ENCODE measurements at regions of chr4 and their contacts with region 1.

Region 1: GRCh38 chr4:26217961-26218676 is 102.7 kb upstream of the RBPJ start:
- DNase-seq: peak; percentile 93 to 95 (median 95)
- H3K4me3 ChIP-seq: peak overlapping the region in 1 of 3 experiments; percentile 48
- H3K4me3 Mint-ChIP-seq: peak overlapping the region; percentile 70 to 82
- H3K27ac ChIP-seq: peak overlapping the region; percentile 96 to 99
- H3K27ac Mint-ChIP-seq: peak overlapping the region; percentile 99 to 100 (median 99)
- H3K4me1 ChIP-seq: peaks cover 28 to 31% of the 10 kb centered on the region in 2 donors
- H3K4me1 Mint-ChIP-seq: peaks cover 47% of the 10 kb centered on the region
- H3K27me3 ChIP-seq: no peaks in the 10 kb centered on the region
- H3K27me3 Mint-ChIP-seq: peaks cover 3 to 13% (median 12%) of the 10 kb centered on the region in 3 donors
- CTCF ChIP-seq: no peak

Region 2: DNA sequence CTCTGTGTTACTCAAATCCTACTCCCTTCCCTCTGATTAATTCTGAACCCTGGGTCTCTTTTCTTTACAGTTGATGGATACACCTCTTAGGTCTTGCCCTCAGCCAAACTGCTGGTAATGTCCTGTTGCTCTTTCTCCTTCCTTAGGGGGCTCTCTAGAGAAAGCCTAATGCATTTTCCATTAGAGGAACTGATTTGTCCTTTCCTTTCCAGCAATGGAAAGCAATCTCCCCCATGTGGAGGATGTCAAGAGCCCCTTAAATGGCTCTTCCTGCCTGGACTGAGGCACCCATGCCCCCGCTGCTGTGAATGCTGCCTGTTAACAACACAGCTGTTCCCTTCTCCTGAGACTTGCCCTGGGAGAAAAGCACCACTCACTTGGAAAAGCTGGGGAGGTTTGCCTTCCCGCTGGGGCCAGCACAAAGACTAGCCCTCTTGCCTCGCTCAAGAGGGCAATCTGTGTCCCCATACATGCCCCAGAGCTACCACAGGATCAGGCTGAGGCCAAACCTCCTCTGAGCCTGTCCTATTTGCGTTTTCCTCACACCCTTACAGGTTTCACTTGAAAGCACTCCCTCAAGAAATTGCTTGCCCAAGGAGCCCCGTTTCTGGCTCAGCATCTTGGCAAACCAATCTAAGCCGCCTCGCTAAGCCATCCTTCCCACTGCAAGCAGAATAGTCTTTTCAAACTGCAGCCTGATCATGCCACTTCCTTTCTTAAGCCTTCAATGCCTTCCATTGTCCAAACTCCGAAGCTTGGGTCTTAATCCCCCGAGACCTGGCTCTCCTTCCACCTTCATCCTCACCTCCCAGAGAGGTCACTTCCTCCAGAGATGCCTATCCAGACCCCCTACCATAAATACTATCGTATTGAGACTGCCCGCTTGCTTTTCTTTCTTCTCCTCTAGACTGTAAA is 327.3 kb before region 1 on chr4:
- intact Hi-C with region 1: no loop called
- DNase-seq: no peak
- H3K4me3 ChIP-seq: no peak overlapping the region
- H3K4me3 Mint-ChIP-seq: no peak overlapping the region
- H3K27ac ChIP-seq: no peak overlapping the region
- H3K27ac Mint-ChIP-seq: peak overlapping the region in 1 of 7 donors; percentile 49
- H3K4me1 ChIP-seq: no peaks in the 10 kb centered on the region
- H3K4me1 Mint-ChIP-seq: peaks cover 7% of the 10 kb centered on the region
- H3K27me3 ChIP-seq: no peaks in the 10 kb centered on the region
- H3K27me3 Mint-ChIP-seq: peaks cover 0 to 9% (median 4%) of the 10 kb centered on the region in 3 donors
- CTCF ChIP-seq: no peak

Region 3: DNA sequence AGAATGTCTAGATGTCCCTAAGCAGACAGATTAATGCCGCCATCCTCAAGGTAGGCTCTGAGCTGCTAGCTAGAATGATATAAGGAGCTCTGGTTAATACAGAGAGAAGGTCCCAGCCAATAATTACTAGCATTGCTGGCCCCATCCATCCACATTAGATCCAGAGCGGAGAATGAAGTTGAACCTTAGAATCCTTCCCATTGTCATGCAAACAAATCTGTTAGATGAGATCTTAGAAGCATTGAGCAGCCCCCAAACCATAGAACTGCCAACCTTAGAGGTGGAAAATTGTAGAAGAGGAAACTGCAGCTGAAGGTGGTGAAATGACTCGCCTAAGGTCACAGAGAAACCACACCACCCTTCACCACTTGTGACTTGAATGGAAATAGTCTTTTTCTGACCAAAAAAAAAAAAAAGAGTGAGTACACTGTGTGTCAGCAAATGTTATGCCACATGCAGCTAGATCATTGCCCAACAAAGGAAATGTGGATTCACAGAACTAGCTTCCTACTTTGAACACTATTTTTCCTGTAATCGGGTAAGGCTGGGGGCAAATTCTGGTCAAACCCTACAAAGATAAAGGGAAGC is 142.0 kb before region 1 on chr4:
- intact Hi-C with region 1: loop called in 1 of 2 experiments (anchors 5 kb)
- DNase-seq: peak; percentile 92 to 97 (median 95)
- H3K4me3 ChIP-seq: peak overlapping the region in 1 of 3 experiments; percentile 15
- H3K4me3 Mint-ChIP-seq: peak overlapping the region; percentile 6 to 56
- H3K27ac ChIP-seq: peak overlapping the region; percentile 71 to 95
- H3K27ac Mint-ChIP-seq: peak overlapping the region; percentile 98 to 99 (median 98)
- H3K4me1 ChIP-seq: peaks cover 56% of the 10 kb centered on the region in 2 donors
- H3K4me1 Mint-ChIP-seq: peaks cover 65% of the 10 kb centered on the region
- H3K27me3 ChIP-seq: peaks cover 0 to 6% of the 10 kb centered on the region in 2 donors
- H3K27me3 Mint-ChIP-seq: peaks cover 5 to 22% (median 7%) of the 10 kb centered on the region in 3 donors
- CTCF ChIP-seq: no peak

Region 4: GRCh38 chr4:26197018-26197779 is 20.9 kb before region 1 on chr4:
- intact Hi-C with region 1: no loop called
- DNase-seq: peak; percentile 72 to 83 (median 80)
- H3K4me3 ChIP-seq: no peak overlapping the region
- H3K4me3 Mint-ChIP-seq: peak overlapping the region in 1 of 2 donors; percentile 56
- H3K27ac ChIP-seq: peak overlapping the region in 1 of 2 donors; percentile 43
- H3K27ac Mint-ChIP-seq: peak overlapping the region in 5 of 7 donors; percentile 14 to 74 (median 25)
- H3K4me1 ChIP-seq: peaks cover 30 to 34% of the 10 kb centered on the region in 2 donors
- H3K4me1 Mint-ChIP-seq: peaks cover 42% of the 10 kb centered on the region
- H3K27me3 ChIP-seq: peaks cover 0 to 3% of the 10 kb centered on the region in 2 donors
- H3K27me3 Mint-ChIP-seq: peaks cover 2 to 14% (median 5%) of the 10 kb centered on the region in 3 donors
- CTCF ChIP-seq: no peak

Region 5: DNA sequence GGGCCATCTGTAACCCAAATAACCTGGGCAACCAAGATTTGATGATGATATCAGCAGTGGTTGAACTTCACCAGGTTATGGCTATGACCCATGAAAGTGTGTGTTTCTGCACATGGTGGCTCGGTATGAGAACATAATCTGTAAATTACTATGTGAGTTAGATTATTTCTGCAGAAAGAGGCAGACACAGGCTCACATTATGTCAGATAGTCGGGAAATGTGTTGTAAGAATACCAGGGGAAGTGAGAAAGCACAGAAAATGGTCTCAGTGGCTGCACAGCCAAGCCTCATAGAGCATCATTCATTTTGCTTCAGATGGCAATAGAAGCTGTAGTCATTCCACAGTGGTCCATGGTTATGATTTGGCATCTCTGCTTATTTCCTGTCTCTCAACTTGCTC is 39.7 kb after region 1 on chr4:
- intact Hi-C with region 1: loop called (anchors 5 to 10 kb)
- DNase-seq: peak; percentile 50 to 71 (median 61)
- H3K4me3 ChIP-seq: peak overlapping the region in 1 of 3 experiments; percentile 32
- H3K4me3 Mint-ChIP-seq: peak overlapping the region in 1 of 2 donors; percentile 5
- H3K27ac ChIP-seq: peak overlapping the region in 1 of 2 donors; percentile 64
- H3K27ac Mint-ChIP-seq: peak overlapping the region; percentile 63 to 86 (median 78)
- H3K4me1 ChIP-seq: peaks cover 42 to 48% of the 10 kb centered on the region in 2 donors
- H3K4me1 Mint-ChIP-seq: peaks cover 49% of the 10 kb centered on the region
- H3K27me3 ChIP-seq: no peaks in the 10 kb centered on the region
- H3K27me3 Mint-ChIP-seq: no peaks in the 10 kb centered on the region
- CTCF ChIP-seq: no peak

Region 6: GRCh38 chr4:26263165-26263564 is 45.0 kb after region 1 on chr4:
- intact Hi-C with region 1: loop called (anchors 5 to 10 kb)
- DNase-seq: peak in 1 of 3 donors; percentile 46
- H3K4me3 ChIP-seq: no peak overlapping the region
- H3K4me3 Mint-ChIP-seq: no peak overlapping the region
- H3K27ac ChIP-seq: no peak overlapping the region
- H3K27ac Mint-ChIP-seq: peak overlapping the region in 2 of 7 donors; percentile 66 to 67
- H3K4me1 ChIP-seq: peaks cover 42 to 48% of the 10 kb centered on the region in 2 donors
- H3K4me1 Mint-ChIP-seq: peaks cover 61% of the 10 kb centered on the region
- H3K27me3 ChIP-seq: no peaks in the 10 kb centered on the region
- H3K27me3 Mint-ChIP-seq: peaks cover 0 to 4% (median 0%) of the 10 kb centered on the region in 3 donors
- CTCF ChIP-seq: no peak

Region 7: DNA sequence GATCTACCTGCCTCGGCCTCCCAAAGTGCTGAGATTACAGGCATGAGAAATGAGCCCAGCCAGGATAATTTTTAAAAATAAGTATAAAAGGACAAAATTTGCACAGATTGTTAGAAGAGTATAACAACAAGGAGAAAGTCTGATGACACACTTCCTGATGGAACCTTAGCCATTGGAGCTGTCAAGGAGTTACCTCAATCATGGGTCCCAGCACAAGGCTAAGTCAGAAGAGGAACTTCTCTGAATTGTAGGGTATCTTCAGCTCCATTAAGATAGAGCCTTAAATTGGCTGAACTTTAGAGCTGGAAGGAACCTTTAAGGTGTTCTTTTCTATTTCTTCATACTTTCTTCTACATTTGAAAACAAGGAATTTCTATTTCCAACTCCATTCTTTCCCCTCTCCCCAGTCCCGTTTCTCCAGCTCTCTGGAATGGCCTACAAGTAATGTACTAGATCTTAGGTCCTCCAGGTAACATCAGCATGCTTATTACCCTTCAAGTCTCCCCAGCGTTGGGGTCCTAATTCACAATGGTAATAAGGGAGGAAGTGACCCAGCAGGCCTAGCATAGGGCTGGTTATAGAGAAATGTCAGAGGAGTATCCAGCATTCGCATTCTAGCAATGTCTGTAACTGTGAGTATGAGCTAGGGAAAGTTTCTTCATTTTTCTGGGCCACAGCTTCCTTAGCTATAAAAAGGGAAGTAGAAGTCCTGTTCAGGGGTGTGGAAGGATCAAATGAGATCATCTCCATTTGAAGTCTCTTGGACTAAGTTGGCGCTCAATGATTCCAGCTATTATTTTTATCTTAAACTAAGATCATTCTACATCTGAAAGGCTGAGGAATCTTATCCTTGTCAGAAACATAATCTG is 84.1 kb after region 1 on chr4:
- intact Hi-C with region 1: loop called in 1 of 2 experiments (anchors 5 kb)
- DNase-seq: peak; percentile 81 to 92 (median 88)
- H3K4me3 ChIP-seq: no peak overlapping the region
- H3K4me3 Mint-ChIP-seq: peak overlapping the region in 1 of 2 donors; percentile 42
- H3K27ac ChIP-seq: peak overlapping the region; percentile 57 to 85
- H3K27ac Mint-ChIP-seq: peak overlapping the region; percentile 93 to 98 (median 96)
- H3K4me1 ChIP-seq: peaks cover 24 to 34% of the 10 kb centered on the region in 2 donors
- H3K4me1 Mint-ChIP-seq: peaks cover 31% of the 10 kb centered on the region
- H3K27me3 ChIP-seq: no peaks in the 10 kb centered on the region
- H3K27me3 Mint-ChIP-seq: peaks cover 0 to 4% (median 0%) of the 10 kb centered on the region in 3 donors
- CTCF ChIP-seq: no peak

Measured in CD14-positive monocyte (primary cell).